ENCODE measurements at regions of chr11 and their contacts with region 1.

Region 1: GRCh38 chr11:123454060-123454651 is 24.1 kb downstream of the GRAMD1B start:
- DNase-seq: peak; percentile 91
- ATAC-seq: peak; percentile 74
- H3K4me3 Mint-ChIP-seq: peak overlapping the region; percentile 75
- H3K27ac Mint-ChIP-seq: peak overlapping the region; percentile 97
- H3K4me1 Mint-ChIP-seq: peaks cover 92% of the 10 kb centered on the region
- H3K27me3 Mint-ChIP-seq: no peaks in the 10 kb centered on the region

Region 2: DNA sequence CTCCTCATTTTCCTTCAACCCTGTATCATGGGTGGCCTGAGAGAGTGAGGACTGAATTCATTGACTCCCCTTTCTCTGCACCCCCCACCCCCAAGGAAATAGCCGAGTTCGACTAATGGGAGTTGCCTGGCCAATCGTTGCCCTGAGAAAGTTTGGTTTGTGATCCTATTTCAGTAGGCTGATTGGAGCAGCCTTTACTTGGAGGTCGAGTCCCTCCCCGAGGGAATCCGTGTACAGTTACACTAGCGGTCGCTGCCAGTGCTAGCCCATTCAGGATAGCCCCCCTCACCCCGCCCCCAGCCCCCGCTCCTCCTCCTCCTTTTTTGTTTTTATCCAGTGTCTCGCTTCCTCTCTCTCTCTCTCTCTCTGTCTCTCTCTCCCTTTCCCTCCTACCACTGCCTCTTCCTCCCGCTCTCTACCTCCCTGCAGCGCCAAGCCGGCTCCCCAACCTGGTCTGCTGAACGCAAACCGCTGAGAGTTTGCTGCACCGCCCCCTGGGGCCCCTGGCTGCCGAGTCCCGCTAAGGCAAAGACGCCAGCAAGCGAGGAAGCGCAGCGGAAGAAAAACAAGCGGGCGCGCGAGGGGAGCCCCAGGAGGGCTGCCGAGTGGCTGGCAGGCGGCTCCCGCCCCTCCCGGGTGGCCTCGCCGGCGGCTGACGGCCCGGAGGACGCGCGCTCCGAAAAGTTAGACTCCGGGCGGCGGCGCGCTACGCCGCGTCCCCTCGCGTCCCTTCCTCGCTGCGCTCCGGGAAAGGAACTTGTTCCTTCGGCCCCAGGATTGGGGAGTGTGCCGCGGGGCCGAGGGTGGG is 24.0 kb before region 1 on chr11 and contains the start of gene GRAMD1B:
- CTCF ChIA-PET with region 1: interaction called, 20 read pairs
- DNase-seq: peak; percentile 90
- ATAC-seq: peak; percentile 75
- H3K4me3 Mint-ChIP-seq: peak within 1 kb of the TSS; percentile 89
- H3K27ac Mint-ChIP-seq: peak within 1 kb of the TSS; percentile 93
- H3K4me1 Mint-ChIP-seq: peaks cover 50% of the 10 kb centered on the region
- H3K27me3 Mint-ChIP-seq: no peaks in the 10 kb centered on the region
- total RNA-seq, gene GRAMD1B: 75.6 to 89.9 TPM

Region 3: GRCh38 chr11:123438191-123438627 is 15.9 kb before region 1 on chr11:
- CTCF ChIA-PET with region 1: interaction called, 30 read pairs
- DNase-seq: peak; percentile 43
- ATAC-seq: peak; percentile 20
- H3K4me3 Mint-ChIP-seq: peak overlapping the region; percentile 23
- H3K27ac Mint-ChIP-seq: peak overlapping the region; percentile 83
- H3K4me1 Mint-ChIP-seq: peaks cover 97% of the 10 kb centered on the region
- H3K27me3 Mint-ChIP-seq: no peaks in the 10 kb centered on the region